AG04449 (cell line): ENCODE measurements at regions of chr5 and their contacts with region 1.

Region 1: DNA sequence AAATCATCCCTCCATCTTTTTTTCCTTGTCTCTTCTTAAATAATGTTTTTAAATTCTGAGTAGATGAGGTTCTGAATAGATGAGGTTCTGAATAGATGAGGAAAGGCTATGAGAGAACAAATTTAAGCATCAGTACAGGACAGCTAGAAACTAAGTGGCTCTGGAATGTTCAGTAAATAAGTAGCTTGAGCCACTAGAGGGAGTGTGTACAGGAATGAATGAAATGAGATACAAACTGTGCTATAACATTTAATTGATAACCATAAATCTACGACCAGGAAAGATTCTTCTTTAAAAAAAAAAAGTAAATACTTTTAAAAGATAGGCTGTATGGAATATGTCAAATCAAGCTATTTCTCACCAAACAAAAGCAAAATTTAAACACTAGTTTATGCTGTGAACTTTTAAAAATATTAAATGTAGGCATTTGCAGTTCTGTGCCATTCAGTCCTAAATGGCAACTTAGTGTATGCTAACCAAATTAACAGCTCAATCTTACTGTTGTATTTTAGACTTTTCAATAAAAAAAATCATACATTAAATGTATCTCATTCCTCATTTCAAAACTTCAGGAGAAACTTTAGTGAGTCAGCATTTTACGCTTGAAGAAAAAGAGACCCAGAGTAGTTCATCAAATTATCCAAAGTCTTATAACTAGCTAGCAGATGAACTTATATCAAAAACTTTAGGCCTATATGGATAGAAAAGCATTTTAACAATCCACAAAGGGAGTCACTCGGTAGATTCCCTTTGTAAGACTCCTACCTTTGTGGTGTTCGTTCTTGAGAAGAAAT is 70.4 kb upstream of the SNX2 start:
- DNase-seq: no peak
- H3K4me3 ChIP-seq: no peak overlapping the region
- CTCF ChIP-seq: peak; percentile 55

Region 2: GRCh38 chr5:121982146-121982892 is 722.1 kb before region 1 on chr5:
- CTCF ChIA-PET with region 1: no interaction called
- POLR2A ChIA-PET with region 1: no interaction called
- DNase-seq: no peak
- H3K4me3 ChIP-seq: no peak overlapping the region
- CTCF ChIP-seq: no peak

Region 3: DNA sequence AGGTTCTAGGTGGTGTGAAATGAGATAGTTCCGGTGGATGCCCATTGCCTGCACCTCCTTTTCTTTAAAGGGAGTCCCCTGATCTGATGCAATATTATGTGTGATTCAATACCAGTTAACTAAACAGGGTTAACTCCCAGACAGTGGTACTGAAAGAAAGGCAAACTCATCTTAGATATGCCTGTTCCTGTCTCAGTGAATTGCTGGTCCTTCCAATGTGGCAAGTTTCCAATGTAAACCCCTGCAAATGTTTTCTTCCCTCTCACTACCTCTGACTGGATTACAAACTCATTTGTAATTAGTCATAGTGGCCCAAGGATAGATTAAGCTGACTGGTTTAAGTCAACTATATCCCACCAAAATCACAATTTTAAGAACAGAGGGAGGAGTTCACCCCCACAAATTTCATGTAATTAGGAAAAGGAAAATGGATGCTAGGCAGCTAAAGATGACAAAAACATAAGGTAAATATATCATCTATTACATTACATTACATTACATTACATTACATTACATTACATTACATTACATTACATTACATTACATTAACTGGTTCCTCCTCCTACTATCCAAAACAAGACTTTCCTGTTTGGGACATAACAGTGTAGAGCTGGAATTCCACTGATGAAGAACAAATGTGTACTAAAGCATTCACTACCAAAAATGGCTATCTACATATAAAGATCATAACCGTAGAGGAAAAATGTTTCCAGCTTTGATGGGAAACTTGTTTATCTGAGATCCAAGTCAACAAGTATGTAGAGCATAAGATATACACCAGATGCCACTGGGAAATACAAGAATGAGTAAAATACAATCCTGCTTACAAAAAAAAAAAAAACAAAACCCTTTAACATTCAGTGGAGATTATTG is 51.1 kb before region 1 on chr5:
- CTCF ChIA-PET with region 1: no interaction called
- POLR2A ChIA-PET with region 1: no interaction called
- DNase-seq: no peak
- H3K4me3 ChIP-seq: no peak overlapping the region
- CTCF ChIP-seq: no peak

Region 4: DNA sequence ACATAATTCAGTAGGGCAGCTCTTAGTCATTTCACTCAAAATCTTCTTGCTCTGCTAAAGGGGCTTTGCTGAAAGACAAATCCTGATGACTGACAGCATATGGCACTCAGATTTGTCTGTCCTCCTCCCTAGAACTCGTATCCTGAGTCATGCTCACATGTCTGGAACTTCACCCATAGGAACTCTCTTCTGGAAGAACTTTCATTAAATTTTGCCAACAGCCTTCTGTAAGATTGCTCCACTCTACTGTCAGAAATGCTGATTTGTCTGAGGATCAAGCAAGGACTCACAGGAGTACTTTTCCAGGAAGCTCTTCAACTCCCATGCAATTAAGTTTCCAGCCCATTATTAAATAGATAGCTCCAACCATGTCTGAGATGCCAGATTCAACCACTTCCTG is 10.7 kb after region 1 on chr5:
- CTCF ChIA-PET with region 1: interaction called, 67 read pairs
- POLR2A ChIA-PET with region 1: no interaction called
- DNase-seq: no peak
- H3K4me3 ChIP-seq: no peak overlapping the region
- CTCF ChIP-seq: no peak

Region 5: GRCh38 chr5:122805481-122805880 is 101.0 kb after region 1 on chr5:
- CTCF ChIA-PET with region 1: no interaction called
- POLR2A ChIA-PET with region 1: no interaction called
- DNase-seq: peak; percentile 16
- H3K4me3 ChIP-seq: no peak overlapping the region
- CTCF ChIP-seq: no peak

Region 6: GRCh38 chr5:122849771-122850170 is 145.3 kb after region 1 on chr5:
- CTCF ChIA-PET with region 1: interaction called, 11 read pairs
- POLR2A ChIA-PET with region 1: no interaction called
- DNase-seq: no peak
- H3K4me3 ChIP-seq: no peak overlapping the region
- CTCF ChIP-seq: no peak

Region 7: DNA sequence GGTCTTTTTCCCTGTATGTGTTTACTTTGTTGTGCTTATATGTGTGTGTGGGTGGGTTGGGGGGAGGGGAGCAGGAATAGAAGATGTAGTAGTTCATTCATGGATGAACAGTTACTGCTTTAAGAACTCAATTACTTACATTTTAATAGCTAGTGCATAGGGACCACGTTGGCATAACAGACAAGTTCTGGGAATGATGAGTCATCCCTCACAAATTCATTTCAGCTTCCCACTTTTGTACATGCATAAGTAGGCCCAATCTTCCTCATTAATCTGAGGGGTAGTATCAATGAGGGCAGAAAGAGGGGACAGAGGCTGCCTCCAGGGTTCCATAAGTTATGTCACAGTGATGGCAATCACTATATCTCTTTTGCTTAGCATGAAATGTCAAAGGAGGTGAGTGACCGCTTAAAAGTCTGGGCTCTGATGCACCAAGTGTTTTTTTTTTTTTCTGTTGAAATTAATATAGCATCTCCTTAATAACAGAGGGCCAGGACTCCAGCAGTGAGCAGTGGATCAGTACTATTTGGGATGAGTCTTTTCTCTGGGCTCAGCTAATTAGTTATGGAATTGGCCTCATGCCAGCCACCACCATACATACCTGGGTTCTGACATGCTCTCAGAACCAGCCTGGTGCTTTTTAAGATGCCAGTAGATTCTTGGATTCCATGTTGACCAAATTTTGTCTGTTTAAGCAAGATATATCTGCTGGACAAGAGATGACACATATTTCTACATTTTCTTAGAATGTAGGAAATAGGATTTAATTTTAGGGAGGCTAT is 421.7 kb after region 1 on chr5:
- CTCF ChIA-PET with region 1: no interaction called
- POLR2A ChIA-PET with region 1: no interaction called
- DNase-seq: peak; percentile 49
- H3K4me3 ChIP-seq: no peak overlapping the region
- CTCF ChIP-seq: no peak